WTC11 (cell line): ENCODE measurements at regions of chr17 and their contacts with region 1.

Region 1: DNA sequence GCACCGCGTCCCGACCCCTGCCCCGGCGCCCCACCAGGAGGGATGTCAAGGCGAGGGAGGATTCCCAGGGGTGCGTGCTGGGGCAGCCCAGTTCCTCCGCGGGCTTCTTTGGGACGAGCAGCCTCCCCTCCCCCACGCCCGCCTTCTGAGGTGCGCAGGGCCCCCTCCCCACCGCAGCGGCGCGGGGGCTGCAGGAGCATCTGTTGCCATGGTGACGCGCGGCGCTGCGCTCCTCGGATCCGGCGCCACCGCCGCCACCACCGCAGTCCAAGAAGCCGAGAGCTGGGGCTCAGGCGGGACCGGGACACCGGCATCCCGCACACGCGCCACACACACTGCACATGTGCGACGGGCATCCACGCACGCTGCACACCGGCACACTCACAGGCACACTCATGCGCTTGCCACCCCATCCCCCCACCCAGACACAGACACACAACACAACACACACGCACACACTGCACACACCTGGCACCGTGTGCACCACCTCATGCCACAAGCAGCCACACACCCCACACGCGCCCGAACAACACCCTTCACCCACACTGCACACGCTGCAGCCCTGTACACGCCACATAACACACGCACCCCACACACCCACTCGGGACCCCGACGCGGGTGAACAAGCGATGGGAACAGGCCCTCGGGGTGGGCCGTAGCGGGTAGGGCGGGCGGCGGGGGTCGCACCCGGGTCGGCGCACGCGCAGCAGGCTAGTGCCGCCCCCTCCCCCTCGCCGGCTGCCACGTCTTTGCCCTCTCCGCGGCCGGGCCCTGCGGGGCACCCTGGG is 17.0 kb downstream of the ENPP7 start:
- DNase-seq: peak; percentile 61
- ATAC-seq: peak; percentile 21; the same call in 1 of the 2 replicates
- H3K4me3 Mint-ChIP-seq: peak overlapping the region; percentile 75
- H3K27ac Mint-ChIP-seq: no peak overlapping the region
- H3K4me1 Mint-ChIP-seq: peaks cover 15% of the 10 kb centered on the region
- H3K27me3 Mint-ChIP-seq: peaks cover 81% of the 10 kb centered on the region
- CTCF ChIP-seq: no peak

Region 2: DNA sequence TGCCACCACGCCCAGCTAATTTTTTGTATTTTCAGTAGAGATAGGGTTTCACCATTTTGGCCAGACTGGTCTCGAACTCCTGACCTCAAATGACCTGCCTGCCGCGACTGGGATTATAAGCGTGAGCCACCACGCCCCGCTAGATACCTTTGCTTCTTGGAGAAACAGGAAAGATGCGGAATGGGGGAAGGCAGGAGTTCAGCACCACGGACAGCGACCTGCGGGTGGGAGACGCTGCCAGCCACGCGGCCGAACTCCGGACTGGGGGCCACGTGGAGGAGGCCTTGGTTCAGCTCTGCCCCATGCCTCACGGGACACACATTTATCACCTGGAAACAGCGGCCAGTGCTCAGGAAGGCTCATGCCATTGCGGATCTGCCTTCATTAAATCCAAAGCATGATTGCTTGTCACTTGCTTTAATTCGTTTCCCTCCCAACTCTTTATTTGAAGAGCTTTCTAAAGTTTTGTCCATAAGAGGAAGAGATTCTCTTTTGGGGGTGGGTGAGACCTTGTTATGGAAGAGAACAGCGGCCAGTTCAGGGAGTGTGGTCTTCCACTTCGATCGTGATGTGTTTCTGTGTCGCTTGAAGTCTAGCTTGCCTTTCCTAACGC is 453.1 kb before region 1 on chr17:
- CTCF ChIA-PET with region 1: no interaction called
- POLR2A ChIA-PET with region 1: interaction called, 11 read pairs
- DNase-seq: peak; percentile 89
- ATAC-seq: peak; percentile 85
- H3K4me3 Mint-ChIP-seq: no peak overlapping the region
- H3K27ac Mint-ChIP-seq: no peak overlapping the region
- H3K4me1 Mint-ChIP-seq: peaks cover 3% of the 10 kb centered on the region; the same call in 1 of the 2 replicates
- H3K27me3 Mint-ChIP-seq: peaks cover 11% of the 10 kb centered on the region
- CTCF ChIP-seq: no peak

Region 3: GRCh38 chr17:79728226-79728907 is 19.3 kb before region 1 on chr17:
- CTCF ChIA-PET with region 1: interaction called, 65 read pairs
- POLR2A ChIA-PET with region 1: no interaction called
- DNase-seq: peak; percentile 84
- ATAC-seq: peak; percentile 77
- H3K4me3 Mint-ChIP-seq: peak overlapping the region; percentile 33
- H3K27ac Mint-ChIP-seq: no peak overlapping the region
- H3K4me1 Mint-ChIP-seq: 0 out of 2 replicates have a peak, but pooled peaks cover 6% of the 10 kb centered on the region
- H3K27me3 Mint-ChIP-seq: no peaks in the 10 kb centered on the region; the same call in 1 of the 2 replicates
- CTCF ChIP-seq: no peak

Region 4: GRCh38 chr17:79789534-79790353 is 42.0 kb after region 1 on chr17:
- CTCF ChIA-PET with region 1: interaction called, 165 read pairs
- POLR2A ChIA-PET with region 1: interaction called, 16 read pairs
- DNase-seq: peak; percentile 82
- ATAC-seq: peak; percentile 50
- H3K4me3 Mint-ChIP-seq: peak overlapping the region; percentile 65
- H3K27ac Mint-ChIP-seq: no peak overlapping the region
- H3K4me1 Mint-ChIP-seq: peaks cover 48% of the 10 kb centered on the region
- H3K27me3 Mint-ChIP-seq: peaks cover 83% of the 10 kb centered on the region
- CTCF ChIP-seq: peak; percentile 65

Region 5: GRCh38 chr17:79803997-79804855 is 56.5 kb after region 1 on chr17:
- CTCF ChIA-PET with region 1: interaction called, 30 read pairs
- POLR2A ChIA-PET with region 1: interaction called, 5 read pairs
- DNase-seq: peak; percentile 50
- ATAC-seq: no peak; the same call in 1 of the 2 replicates
- H3K4me3 Mint-ChIP-seq: peak overlapping the region; percentile 53
- H3K27ac Mint-ChIP-seq: no peak overlapping the region
- H3K4me1 Mint-ChIP-seq: peaks cover 62% of the 10 kb centered on the region
- H3K27me3 Mint-ChIP-seq: peaks cover 100% of the 10 kb centered on the region
- CTCF ChIP-seq: no peak